GM10248 (cell line): ENCODE measurements at regions of chr5 and their contacts with region 1.

Region 1: GRCh38 chr5:160439205-160439600 is 17.5 kb downstream of the PTTG1 start:
- DNase-seq: peak; percentile 63
- CTCF ChIP-seq: peak; percentile 78

Region 2: DNA sequence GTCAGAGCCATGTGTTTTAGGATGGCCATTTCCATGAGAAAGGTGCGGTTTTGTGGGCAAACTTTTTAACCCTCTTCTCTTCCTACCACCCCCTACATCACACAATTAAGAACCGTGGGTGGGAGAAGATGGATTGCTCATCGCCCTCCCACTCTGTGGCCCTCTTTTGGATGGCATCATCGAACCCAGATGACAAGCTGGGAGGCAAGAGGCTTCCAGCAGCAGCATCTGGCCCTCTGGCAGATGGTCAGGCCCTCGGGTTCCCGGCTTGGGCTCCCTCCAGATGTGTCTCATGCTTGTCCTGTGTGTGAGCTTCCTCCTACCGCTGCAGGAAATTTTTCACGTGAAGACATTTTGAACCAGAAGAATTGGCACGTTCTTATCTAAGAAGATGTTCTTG is 1539.4 kb before region 1 on chr5:
- CTCF ChIA-PET with region 1: no interaction called
- POLR2A ChIA-PET with region 1: no interaction called
- DNase-seq: no peak
- CTCF ChIP-seq: no peak

Region 3: GRCh38 chr5:160021831-160022446 is 417.3 kb before region 1 on chr5:
- CTCF ChIA-PET with region 1: interaction called, 12 read pairs
- POLR2A ChIA-PET with region 1: no interaction called
- DNase-seq: peak; percentile 59
- CTCF ChIP-seq: peak; percentile 69

Region 4: DNA sequence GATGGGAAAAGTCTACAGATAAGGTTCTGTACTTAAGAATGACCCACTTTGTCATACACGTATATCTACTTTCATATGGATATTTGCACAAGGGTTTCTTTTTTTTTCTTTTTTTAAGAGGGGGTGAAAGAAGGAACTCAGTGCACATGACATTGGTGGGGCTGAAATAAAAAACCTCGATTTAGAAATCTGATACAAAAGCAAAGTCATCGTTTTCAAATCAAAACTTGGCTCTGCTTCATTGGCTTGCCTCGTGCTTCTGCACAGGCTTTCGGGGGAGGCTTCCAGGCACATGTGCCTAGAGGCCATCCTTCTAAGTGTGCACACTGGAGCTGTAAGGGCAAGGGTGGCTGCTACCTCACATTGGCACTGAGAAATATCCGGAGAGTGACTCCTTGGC is 13.6 kb after region 1 on chr5:
- CTCF ChIA-PET with region 1: interaction called, 159 read pairs
- POLR2A ChIA-PET with region 1: no interaction called
- DNase-seq: no peak
- CTCF ChIP-seq: no peak

Region 5: GRCh38 chr5:160467555-160468362 is 28.6 kb after region 1 on chr5:
- CTCF ChIA-PET with region 1: interaction called, 230 read pairs
- POLR2A ChIA-PET with region 1: interaction called, 31 read pairs
- DNase-seq: peak; percentile 86
- CTCF ChIP-seq: no peak

Region 6: DNA sequence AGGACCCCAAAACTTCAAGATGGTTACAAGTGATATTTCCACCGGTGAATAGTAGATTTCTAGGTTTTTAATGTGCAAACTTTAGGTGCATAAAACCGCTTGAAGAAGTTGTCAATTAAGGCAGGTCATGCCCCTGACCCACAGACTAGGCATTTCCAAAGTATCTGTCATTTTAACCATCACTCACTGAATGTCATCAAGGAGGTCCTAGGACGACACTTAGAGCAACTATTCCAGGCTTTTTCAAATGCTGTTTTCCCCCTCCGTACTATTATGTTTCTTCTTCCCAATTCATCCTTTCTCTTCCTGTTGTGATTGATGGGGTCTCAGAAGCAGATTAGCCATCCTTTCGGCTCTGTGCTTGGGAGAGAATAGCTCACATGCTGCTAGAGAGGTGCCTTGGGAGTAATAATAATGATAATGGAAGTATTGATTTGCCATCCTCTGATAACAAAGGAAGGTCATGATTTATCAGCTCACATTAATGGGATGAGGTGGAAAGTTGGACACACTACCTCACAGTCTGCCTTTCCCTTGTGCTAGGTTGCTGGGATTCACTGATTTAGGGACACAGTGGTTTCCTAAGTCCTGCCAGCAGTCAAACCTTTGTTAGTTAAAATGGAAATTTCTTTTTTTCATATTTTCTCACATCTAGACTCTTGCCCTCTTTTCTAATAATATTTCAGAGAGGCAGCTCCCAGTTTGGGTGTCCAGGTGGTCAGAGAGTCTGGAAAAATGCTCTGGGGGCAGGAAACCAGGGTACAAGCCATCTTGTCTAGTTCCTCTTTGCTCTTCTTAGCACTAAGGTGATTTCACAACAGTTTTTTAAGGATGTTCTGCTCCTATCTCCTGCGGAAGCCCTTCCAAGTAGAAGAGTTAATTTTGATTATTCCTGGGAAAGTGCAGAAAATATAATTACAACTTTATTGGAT is 49.5 kb after region 1 on chr5:
- CTCF ChIA-PET with region 1: interaction called, 147 read pairs
- POLR2A ChIA-PET with region 1: no interaction called
- DNase-seq: no peak
- CTCF ChIP-seq: no peak

Region 7: DNA sequence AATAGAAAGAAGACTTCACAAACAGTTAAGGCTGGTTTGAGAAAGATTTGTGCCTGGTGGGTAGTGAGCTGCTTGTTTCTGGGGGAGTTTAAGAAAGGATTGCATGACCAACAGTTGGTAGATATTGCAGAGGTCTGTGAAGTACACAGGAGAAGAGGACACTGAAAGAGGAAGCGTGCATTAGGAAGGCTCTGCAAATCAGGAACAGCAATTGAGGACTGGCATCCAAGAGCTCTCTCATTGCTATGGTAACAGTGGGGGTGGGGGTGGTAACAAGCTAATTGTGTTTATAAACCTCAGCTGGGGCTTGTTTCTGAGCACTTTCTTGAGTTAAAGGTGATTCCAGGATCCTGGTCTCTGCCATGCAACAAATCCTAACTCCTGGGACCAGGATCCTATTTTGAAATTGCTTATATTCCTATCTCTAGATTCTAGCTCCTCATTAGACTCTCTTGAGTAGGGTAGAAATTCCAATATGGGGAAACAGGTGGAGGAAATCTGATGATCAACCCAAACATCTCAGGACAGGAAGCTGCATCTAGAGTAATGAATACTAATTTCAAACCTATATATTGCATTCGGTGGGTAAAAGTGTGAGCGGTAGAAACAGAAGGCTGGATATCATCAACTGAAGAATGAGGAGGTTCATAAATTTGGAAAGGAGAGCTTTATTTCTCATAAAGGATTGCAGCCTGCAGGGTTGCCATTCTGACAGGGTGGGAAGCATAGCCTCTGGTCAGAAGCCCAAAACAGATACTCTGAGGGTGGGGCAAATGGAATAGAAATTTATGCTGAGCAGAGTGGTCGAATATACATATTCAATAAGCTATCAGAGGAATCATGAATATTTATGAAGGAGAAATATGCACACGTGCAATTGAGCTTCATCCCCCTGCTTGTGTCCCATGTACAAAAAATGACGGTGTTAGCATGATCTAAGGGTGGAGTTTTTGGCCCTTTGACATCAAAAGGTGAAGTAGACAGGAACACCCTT is 61.9 kb after region 1 on chr5:
- CTCF ChIA-PET with region 1: interaction called, 48 read pairs
- POLR2A ChIA-PET with region 1: no interaction called
- DNase-seq: no peak
- CTCF ChIP-seq: no peak

Region 8: DNA sequence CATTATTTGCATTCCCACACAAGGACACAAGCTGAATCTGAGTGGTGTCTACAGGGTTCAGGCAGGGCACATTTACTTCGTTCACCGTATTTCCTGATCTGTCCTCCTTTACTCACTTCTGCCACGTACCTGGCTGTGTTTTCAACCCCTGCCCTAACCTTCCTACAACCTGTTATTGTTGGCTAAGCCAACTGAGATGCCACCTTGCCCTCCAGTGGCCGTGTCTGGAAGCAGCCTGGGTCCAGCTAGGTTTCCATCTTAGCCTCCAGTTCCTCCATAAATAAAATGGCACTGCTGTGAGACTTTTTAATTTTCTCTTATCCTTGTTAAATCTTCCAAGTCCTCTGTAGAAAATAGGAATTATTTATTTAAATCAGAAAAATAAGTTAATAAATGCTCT is 348.0 kb after region 1 on chr5:
- CTCF ChIA-PET with region 1: interaction called, 24 read pairs
- POLR2A ChIA-PET with region 1: no interaction called
- DNase-seq: no peak
- CTCF ChIP-seq: peak; percentile 41